HEK293T (cell line): ENCODE measurements at regions of chr11 and their contacts with region 1.

Region 1: DNA sequence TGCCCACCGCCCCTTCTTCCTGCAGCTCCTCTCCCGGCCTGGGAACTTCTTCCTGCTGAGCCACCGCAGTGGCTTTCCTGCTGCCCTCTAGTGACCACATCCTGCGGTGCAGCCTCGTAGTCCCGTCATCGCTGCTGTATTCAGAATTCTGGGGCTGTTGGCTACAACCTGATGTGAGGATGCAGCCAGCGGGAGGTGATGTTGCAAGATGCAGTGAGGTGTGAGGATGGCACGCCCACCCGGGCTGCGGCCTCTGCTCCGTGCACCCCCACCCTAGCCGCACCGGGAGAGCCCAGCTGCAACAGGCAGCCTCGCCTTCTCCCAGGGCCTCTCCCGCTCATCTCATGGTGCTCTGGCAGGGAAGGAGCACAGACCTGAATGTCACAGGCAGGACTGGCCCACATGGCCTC is 10.1 kb downstream of the CHST1 start:
- DNase-seq: peak; percentile 83

Region 2: GRCh38 chr11:45371251-45372115 is 283.9 kb before region 1 on chr11:
- CTCF ChIA-PET with region 1: interaction called, 21 read pairs
- POLR2A ChIA-PET with region 1: no interaction called
- DNase-seq: peak; percentile 84

Region 3: DNA sequence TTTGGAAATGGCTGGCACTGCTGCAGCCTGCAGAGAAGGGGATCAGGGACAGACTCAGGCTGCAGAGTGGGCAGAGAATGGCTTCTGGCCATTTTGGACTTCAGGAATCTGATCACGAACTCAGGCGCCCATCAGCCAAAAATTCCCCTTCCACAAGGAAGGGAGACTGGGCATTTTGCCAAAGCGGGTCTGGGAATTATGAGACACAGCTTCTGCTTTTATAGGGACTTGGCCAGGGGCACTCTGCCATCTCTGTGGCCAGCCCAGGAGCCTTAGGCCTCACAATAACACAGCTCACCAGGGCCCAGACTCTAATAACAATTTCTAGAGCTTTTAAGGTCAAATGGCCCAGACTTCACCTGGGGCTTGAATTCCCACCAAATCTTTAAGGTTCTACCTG is 64.6 kb before region 1 on chr11:
- CTCF ChIA-PET with region 1: no interaction called
- POLR2A ChIA-PET with region 1: no interaction called
- DNase-seq: no peak

Region 4: DNA sequence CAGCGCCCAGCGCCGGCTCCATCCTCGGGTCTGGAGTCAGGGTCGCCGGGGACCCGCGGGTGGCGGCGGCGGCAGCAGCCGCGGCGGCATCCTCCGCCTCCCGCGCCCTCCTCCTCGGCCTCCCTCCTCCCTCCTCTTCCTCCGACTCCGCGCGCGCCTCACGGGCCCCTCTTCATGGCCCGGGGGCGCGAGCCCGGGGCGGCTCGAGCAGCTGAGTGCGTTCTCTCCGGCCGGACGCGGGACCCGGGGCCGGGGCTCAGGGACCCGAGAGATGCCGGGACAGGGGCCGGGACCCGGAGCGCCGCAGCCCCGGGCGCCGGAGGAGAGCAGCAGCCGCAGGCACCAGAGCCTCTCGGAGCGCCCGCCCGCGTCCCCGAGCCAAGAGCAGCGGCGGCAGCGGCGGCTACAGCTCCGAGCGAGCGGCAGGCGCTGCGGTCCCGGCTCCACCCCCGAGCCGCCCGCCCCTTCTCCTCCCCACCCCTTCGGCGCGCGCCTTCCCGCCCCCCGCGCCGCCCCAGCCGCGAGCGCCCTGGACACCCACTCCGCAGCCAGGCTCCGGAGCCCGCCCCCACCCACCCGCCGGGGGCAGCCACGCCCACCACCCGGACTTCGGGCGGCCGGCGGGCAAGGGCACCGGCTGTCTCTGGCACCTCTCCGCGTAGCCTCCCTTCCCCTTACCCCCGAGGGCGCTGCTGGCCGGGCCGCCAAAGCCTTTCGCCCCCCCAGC is 10.0 kb after region 1 on chr11 and contains the start of gene CHST1:
- CTCF ChIA-PET with region 1: interaction called, 17 read pairs
- POLR2A ChIA-PET with region 1: no interaction called
- DNase-seq: peak; percentile 55

Region 5: DNA sequence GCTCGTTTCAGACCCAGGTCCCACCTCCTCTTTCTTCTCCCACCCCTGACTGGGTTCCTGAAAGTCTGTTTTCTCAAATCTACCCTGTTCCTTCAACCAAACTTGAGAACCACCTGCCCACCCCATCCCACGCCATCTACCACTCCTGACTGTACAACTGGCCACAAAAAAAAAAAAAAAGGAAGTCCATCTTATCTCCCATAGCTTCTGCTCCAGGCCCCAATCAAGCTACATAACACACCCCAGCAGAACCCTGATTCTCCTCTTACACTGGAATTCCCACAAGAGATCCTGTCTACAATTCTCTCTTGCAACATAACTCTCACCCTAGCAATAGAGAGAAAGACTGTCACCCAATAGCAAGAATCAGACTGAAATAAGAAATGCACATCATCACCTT is 49.3 kb after region 1 on chr11:
- CTCF ChIA-PET with region 1: no interaction called
- POLR2A ChIA-PET with region 1: no interaction called
- DNase-seq: no peak

Region 6: GRCh38 chr11:45791485-45791884 is 136.1 kb after region 1 on chr11:
- CTCF ChIA-PET with region 1: no interaction called
- POLR2A ChIA-PET with region 1: no interaction called
- DNase-seq: no peak